Activated CD8-positive, alpha-beta T cell treated with anti-CD3 and anti-CD28 coated beads for 36 hours (primary cell): ENCODE measurements at regions of chr16 and their contacts with region 1.

Region 1: DNA sequence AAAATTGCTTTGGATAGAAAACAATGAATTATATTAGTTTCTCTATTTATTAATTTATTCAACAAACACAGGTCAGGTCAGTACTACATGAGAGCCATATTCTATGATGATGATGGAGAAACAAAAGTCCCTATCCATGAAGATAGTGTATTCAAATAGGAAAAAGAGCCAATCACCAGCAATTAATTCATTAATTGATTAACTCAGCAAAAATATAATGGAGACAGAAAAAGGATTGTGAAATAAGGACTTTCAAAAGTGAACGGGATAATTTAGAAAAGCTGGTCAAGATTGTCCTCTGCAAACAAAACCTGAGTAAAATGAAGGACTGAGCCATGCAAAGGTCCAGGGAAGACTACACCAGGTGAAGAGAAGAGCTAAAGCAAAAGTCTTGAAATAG is 1517.7 kb upstream of the CDH8 start:
- DNase-seq: no peak
- ATAC-seq: no peak
- H3K4me3 Mint-ChIP-seq: no peak overlapping the region
- H3K27ac Mint-ChIP-seq: no peak overlapping the region
- H3K4me1 Mint-ChIP-seq: no peaks in the 10 kb centered on the region
- H3K27me3 Mint-ChIP-seq: no peaks in the 10 kb centered on the region
- CTCF ChIP-seq: no peak

Region 2: DNA sequence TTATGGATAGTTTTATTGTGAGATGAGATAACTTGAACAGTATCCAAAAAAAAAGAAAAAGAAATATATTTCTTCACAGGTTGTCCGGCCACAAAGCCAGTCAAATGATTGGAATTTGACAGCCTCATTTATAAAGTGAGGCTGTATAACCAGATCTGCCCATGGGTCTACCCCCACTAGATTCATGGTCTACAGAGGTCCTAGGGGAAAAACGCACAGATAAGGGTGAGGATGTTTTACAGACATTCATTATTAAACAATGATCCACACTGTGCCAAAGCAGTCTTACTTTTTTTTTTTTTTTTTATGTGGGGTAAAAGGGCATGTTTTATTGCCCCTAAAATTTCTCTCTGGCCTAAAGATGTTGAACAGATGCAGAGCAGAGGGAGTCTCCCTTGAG is 14.7 kb before region 1 on chr16:
- CTCF ChIA-PET with region 1: no interaction called
- POLR2A ChIA-PET with region 1: no interaction called
- intact Hi-C with region 1: loop called (anchors 1 kb)
- DNase-seq: no peak
- ATAC-seq: no peak
- H3K4me3 Mint-ChIP-seq: no peak overlapping the region
- H3K27ac Mint-ChIP-seq: no peak overlapping the region
- H3K4me1 Mint-ChIP-seq: no peaks in the 10 kb centered on the region
- H3K27me3 Mint-ChIP-seq: no peaks in the 10 kb centered on the region
- CTCF ChIP-seq: no peak